CD8-positive, alpha-beta memory T cell (primary cell): ENCODE measurements at regions of chr13 and their contacts with region 1.

Region 1: DNA sequence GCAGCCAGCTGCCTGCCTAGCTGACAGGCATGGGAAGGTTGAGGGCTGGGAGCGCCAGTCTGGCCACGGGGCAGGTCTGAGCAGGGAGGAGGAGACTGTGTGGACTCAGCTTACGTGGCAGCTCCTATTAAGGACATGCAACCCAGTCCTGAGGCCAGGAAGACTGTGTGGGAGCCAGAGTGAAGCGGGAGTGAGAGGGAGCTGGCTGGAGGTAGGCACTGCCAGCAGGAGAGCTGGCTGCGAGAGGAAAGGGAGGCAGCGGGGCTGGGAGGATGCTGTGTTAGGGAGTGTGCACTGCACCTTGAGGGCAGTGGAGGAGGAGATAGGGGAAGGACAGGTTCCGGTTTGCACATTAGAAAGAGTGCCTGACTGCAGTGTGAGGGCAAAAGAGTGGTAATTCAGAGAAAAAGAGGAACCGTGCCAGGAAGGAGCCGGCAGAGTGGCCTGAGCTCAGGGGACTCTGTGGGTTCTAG is 99.2 kb downstream of the SLC7A1 start:
- DNase-seq: no peak
- H3K4me3 ChIP-seq: no peak overlapping the region
- H3K4me3 Mint-ChIP-seq: no peak overlapping the region
- H3K27ac ChIP-seq: no peak overlapping the region
- H3K27ac Mint-ChIP-seq: no peak overlapping the region
- H3K4me1 ChIP-seq: no peaks in the 10 kb centered on the region
- H3K4me1 Mint-ChIP-seq: peaks cover 0 to 5% (median 4%) of the 10 kb centered on the region in 3 donors
- H3K27me3 ChIP-seq: no peaks in the 10 kb centered on the region
- H3K27me3 Mint-ChIP-seq: peaks cover 25 to 36% of the 10 kb centered on the region in 2 donors

Region 2: GRCh38 chr13:29465741-29466293 is 30.5 kb before region 1 on chr13:
- CTCF ChIA-PET with region 1: no interaction called
- POLR2A ChIA-PET with region 1: no interaction called
- DNase-seq: no peak
- H3K4me3 ChIP-seq: no peak overlapping the region
- H3K4me3 Mint-ChIP-seq: no peak overlapping the region
- H3K27ac ChIP-seq: no peak overlapping the region
- H3K27ac Mint-ChIP-seq: no peak overlapping the region
- H3K4me1 ChIP-seq: no peaks in the 10 kb centered on the region
- H3K4me1 Mint-ChIP-seq: no peaks in the 10 kb centered on the region
- H3K27me3 ChIP-seq: no peaks in the 10 kb centered on the region
- H3K27me3 Mint-ChIP-seq: peaks cover 3 to 7% of the 10 kb centered on the region in 2 donors

Region 3: DNA sequence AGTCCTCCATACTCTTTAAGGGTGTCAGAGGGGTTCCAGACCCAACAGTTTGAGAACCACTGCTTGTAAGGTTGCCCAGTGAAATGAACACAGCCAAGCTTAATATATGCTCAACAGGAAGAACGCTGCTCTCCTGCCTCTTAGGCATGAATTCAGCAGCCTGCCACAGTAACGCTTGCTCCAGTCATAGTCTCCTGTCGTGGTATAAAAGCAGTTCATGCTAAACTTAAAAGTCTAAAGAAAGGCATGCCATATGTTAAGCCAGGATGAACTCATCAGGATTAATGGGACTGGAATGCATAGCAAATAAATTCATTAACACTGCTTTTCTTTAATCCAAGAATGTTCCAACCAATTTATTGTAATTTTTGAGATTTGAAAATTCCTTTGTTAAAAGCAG is 60.5 kb after region 1 on chr13:
- CTCF ChIA-PET with region 1: no interaction called
- POLR2A ChIA-PET with region 1: no interaction called
- DNase-seq: no peak
- H3K4me3 ChIP-seq: no peak overlapping the region
- H3K4me3 Mint-ChIP-seq: no peak overlapping the region
- H3K27ac ChIP-seq: no peak overlapping the region
- H3K27ac Mint-ChIP-seq: peak overlapping the region in 1 of 8 donors; percentile 23
- H3K4me1 ChIP-seq: no peaks in the 10 kb centered on the region
- H3K4me1 Mint-ChIP-seq: peaks cover 3 to 16% (median 12%) of the 10 kb centered on the region in 3 donors
- H3K27me3 ChIP-seq: no peaks in the 10 kb centered on the region
- H3K27me3 Mint-ChIP-seq: no peaks in the 10 kb centered on the region

Region 4: GRCh38 chr13:29733147-29733611 is 236.9 kb after region 1 on chr13:
- CTCF ChIA-PET with region 1: no interaction called
- POLR2A ChIA-PET with region 1: no interaction called
- DNase-seq: no peak
- H3K4me3 ChIP-seq: no peak overlapping the region
- H3K4me3 Mint-ChIP-seq: no peak overlapping the region
- H3K27ac ChIP-seq: no peak overlapping the region
- H3K27ac Mint-ChIP-seq: peak overlapping the region in 1 of 8 donors; percentile 8
- H3K4me1 ChIP-seq: no peaks in the 10 kb centered on the region
- H3K4me1 Mint-ChIP-seq: peaks cover 7 to 8% (median 8%) of the 10 kb centered on the region in 3 donors
- H3K27me3 ChIP-seq: peaks cover 24% of the 10 kb centered on the region
- H3K27me3 Mint-ChIP-seq: peaks cover 26 to 68% of the 10 kb centered on the region in 2 donors

Region 5: DNA sequence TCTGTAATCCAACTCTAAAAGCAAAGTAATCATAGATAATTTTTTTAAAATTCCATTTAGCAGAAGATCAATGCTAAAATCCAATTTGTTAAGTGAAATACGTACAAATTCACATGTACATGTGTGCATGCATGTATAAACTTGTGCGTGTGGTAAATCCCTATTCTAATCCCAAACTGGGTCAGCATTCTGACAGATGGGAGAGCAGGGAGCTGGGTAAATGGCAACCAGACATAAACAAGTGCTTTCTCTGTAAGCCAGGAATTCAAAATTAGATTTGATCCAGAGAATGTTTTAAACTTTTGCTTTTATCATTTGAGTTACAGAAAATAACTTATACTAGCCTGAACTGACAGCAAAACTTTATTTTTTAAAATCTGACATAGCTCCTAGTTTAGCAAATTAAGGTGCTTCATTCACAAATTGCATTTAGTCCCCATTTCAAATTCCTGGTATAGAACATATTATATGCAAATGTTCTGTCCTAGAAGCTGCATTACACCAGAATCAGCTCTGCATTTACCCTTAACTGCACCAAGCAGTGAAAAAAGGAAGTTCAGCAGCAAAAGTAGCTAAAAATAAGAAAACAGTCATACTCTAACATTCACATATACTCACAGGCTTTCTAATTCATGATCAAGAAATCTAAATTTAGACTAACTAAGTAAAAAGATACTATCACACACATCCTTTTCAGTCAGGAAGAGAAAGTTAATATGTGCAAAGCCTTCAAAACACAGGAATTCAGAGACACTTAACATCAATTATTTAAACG is 321.5 kb after region 1 on chr13:
- CTCF ChIA-PET with region 1: no interaction called
- POLR2A ChIA-PET with region 1: interaction called, 10 read pairs
- DNase-seq: no peak
- H3K4me3 ChIP-seq: no peak overlapping the region
- H3K4me3 Mint-ChIP-seq: peak overlapping the region in 2 of 7 donors; percentile 3 to 5
- H3K27ac ChIP-seq: no peak overlapping the region
- H3K27ac Mint-ChIP-seq: peak overlapping the region in 2 of 8 donors; percentile 61 to 66
- H3K4me1 ChIP-seq: peaks cover 13% of the 10 kb centered on the region
- H3K4me1 Mint-ChIP-seq: peaks cover 44 to 88% (median 72%) of the 10 kb centered on the region in 3 donors
- H3K27me3 ChIP-seq: no peaks in the 10 kb centered on the region
- H3K27me3 Mint-ChIP-seq: no peaks in the 10 kb centered on the region